ENCODE measurements at regions of chr9 and their contacts with region 1.

Region 1: GRCh38 chr9:129482521-129483414 is 138.1 kb downstream of the C9orf50 start:
- DNase-seq: peak; percentile 96
- H3K4me3 ChIP-seq: peak overlapping the region; percentile 41 to 67 (median 63)
- H3K27ac ChIP-seq: peak overlapping the region; percentile 99 to 100 (median 99)
- H3K4me1 ChIP-seq: peaks cover 0 to 84% (median 79%) of the 10 kb centered on the region in 4 donors
- H3K27me3 ChIP-seq: no peaks in the 10 kb centered on the region
- CTCF ChIP-seq: no peak
- EP300 ChIP-seq: peak in 1 of 4 donors; percentile 22
- POLR2A ChIP-seq: peak in 1 of 2 donors; percentile 7

Region 2: DNA sequence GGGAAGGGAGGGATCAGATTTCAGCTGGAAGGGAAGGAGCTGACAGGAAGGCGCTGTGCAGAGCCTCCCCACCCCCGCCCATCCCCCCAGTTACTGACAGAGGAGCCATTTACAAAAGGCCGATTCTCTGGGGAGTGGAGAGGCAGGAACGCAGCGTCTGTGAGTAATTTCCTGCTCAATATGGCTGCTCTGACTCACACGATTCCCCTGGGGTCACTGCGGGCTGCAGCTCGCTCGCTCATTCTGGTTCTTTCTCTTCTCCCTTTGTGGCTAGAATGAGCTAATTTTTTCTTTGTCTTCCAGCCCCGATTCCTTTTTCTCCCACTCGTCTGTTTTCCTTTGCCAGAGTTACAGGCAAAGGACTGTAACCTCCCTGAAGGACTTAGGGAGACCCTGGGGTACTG is 342.8 kb before region 1 on chr9:
- intact Hi-C with region 1: loop called (anchors 2 kb)
- DNase-seq: peak; percentile 98
- H3K4me3 ChIP-seq: peak overlapping the region; percentile 36 to 59 (median 50)
- H3K27ac ChIP-seq: peak overlapping the region; percentile 97 to 100 (median 99)
- H3K4me1 ChIP-seq: peaks cover 0 to 73% (median 64%) of the 10 kb centered on the region in 4 donors
- H3K27me3 ChIP-seq: no peaks in the 10 kb centered on the region
- CTCF ChIP-seq: no peak
- EP300 ChIP-seq: peak in 2 of 4 donors; percentile 71 to 76
- POLR2A ChIP-seq: peak; percentile 55 to 62

Region 3: DNA sequence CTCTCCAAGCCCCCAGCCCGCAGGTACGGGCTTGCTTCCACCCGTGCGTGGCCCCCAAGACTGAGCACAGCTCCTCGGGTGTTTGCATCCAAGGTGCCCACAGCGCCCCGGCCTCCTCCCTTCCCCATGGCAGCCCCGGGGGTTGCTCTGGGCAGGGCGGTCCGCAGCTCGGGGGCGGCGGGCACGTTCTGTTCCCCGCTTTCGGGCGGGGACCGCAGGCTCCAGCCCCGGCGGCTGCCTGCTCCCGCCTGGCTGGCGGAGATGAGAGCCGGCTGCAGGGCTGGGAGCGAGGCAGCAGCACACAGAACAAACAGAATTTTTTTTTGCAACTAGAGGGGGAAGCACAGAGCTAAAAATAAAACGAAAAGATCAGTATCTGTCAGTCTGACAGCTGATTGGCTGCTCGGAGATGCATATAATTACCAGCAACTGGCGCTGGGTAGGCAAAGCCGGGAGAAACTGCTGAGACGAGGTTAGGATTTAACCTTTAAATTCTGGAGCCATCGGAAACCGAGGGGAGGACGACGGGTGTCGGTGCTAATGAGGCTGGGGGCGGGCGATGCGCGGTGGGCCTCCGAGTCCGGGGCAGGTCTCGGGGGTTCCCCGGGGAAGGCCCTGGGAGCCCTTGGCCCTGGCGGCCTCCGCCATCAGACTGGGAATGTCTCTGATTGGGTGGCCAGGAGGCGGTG is 162.0 kb before region 1 on chr9:
- intact Hi-C with region 1: loop called (anchors 5 kb)
- DNase-seq: peak; percentile 80
- H3K4me3 ChIP-seq: peak overlapping the region in 3 of 4 donors; percentile 32 to 51 (median 49)
- H3K27ac ChIP-seq: peak overlapping the region; percentile 75 to 87 (median 82)
- H3K4me1 ChIP-seq: peaks cover 0 to 49% (median 43%) of the 10 kb centered on the region in 4 donors
- H3K27me3 ChIP-seq: no peaks in the 10 kb centered on the region
- CTCF ChIP-seq: peak in 3 of 4 experiments; percentile 13 to 27 (median 23)
- EP300 ChIP-seq: no peak
- POLR2A ChIP-seq: peak in 1 of 2 donors; percentile 32

Region 4: DNA sequence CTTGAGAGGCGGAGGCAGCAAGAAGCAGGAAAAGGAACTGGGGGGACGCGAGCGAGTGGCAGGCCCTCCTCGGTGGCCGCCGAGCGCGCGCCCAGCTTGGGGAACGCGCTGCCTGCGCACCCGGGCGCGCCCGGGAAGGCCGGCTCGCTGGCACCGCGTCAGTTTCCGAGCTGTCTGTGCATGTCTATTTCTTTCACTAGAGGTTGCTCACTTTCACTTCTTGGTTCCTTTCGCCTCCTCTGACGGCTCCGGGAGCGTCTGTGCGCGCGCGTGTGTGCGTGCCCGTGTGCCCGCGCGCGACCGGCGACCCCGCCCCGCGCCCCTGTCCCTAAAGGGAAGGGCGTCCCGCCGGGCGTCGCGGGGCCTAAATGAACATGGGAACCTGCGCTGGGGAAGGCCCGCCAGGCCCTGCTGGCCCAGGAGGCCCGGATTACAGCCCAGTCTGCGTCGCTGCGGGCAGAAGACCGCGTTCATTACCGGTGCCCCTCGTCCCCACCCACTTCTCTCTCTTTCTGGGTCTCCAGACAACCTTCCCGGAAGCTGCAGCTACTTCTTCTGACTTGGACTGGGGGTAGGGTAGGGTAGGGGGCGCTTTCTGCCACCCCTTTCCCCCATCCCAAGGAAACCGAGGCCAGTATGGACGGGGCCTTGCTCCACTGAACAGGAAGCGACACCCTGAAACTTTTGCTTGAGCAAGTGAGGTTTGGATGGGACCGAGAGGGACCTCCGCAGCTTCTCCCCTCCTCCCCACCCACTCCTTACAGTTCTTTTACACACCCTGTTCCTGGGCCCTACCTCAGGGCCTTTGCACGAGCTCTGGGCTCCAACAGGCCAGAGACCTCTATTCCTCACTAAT is 99.0 kb before region 1 on chr9:
- intact Hi-C with region 1: loop called (anchors 1 kb)
- DNase-seq: peak; percentile 92
- H3K4me3 ChIP-seq: peak overlapping the region; percentile 42 to 71 (median 57)
- H3K27ac ChIP-seq: peak overlapping the region; percentile 87 to 93 (median 88)
- H3K4me1 ChIP-seq: peaks cover 0 to 22% (median 18%) of the 10 kb centered on the region in 4 donors
- H3K27me3 ChIP-seq: no peaks in the 10 kb centered on the region
- CTCF ChIP-seq: peak in 1 of 4 experiments; percentile 13
- EP300 ChIP-seq: no peak
- POLR2A ChIP-seq: no peak

Region 5: DNA sequence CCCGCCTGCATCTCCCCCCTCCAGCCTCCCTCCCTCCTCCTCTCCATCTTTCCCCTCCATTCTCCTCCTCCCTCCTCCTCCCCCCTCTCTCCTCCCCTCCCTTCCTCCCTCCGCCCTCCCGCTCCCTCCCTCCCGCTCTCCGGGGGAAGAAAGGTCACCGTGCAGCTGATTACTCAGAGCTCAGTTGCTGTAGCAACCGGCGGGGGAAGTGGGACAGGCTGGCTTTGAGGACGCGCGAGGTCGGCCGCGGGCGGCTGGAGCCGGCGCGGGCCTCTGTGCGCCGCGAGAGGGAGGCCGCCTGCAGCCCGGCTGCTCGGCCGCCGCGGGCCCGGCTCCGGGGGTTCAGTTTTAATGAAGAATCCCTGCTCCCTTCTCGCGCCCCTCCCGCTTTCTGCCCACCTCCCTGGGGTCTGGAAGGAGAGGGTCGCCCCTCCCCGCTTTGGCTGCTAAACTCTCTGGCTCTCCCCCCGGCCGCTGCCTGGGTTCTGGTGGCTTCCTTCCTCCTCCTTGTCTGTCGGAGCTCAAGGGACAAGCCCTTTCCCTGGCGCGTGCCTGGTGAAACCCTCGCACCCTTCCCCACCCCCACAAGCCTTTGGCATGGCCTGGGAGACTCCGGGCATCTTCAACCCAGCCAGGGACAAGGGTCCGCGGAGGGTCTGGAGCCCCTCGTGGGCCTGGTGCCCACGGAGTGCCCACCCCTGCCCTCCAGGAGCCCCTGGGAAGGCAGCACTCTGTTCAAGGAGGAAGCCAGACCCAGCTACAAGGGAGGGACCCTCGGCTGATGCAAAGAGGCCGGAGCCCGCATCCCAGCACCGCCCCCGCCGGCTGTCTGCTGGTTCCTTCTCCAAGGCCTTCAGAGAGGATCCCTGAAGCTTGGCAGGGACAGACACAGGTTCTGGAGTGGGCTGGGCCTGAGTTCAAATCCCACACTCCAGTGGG is 22.2 kb before region 1 on chr9:
- intact Hi-C with region 1: loop called (anchors 1 kb)
- DNase-seq: peak; percentile 99
- H3K4me3 ChIP-seq: peak overlapping the region; percentile 19 to 46 (median 46)
- H3K27ac ChIP-seq: peak overlapping the region; percentile 95 to 100 (median 98)
- H3K4me1 ChIP-seq: peaks cover 0 to 68% (median 54%) of the 10 kb centered on the region in 4 donors
- H3K27me3 ChIP-seq: no peaks in the 10 kb centered on the region
- CTCF ChIP-seq: peak in 1 of 4 experiments; percentile 23
- EP300 ChIP-seq: peak in 2 of 4 donors; percentile 53 to 72
- POLR2A ChIP-seq: peak in 1 of 2 donors; percentile 42

Region 6: GRCh38 chr9:129626079-129626624 is 143.4 kb after region 1 on chr9 and contains the start of gene NTMT1:
- intact Hi-C with region 1: no loop called
- DNase-seq: peak; percentile 94
- H3K4me3 ChIP-seq: peak within 1 kb of the TSS; percentile 71 to 88 (median 85)
- H3K27ac ChIP-seq: peak within 1 kb of the TSS; percentile 89 to 98 (median 92)
- H3K4me1 ChIP-seq: peaks cover 0 to 50% (median 43%) of the 10 kb centered on the region in 4 donors
- H3K27me3 ChIP-seq: no peaks in the 10 kb centered on the region
- CTCF ChIP-seq: no peak
- EP300 ChIP-seq: peak in 1 of 4 donors; percentile 31
- POLR2A ChIP-seq: peak; percentile 96 to 98
- total RNA-seq, gene NTMT1: 5.8 to 22.5 (median 16.9) TPM